HCT116 (cell line): ENCODE measurements at regions of chr1 and their contacts with region 1.

Region 1: GRCh38 chr1:23330846-23331245 is 13.2 kb downstream of the HNRNPR start:
- DNase-seq: no peak
- ATAC-seq: no peak
- H3K4me3 ChIP-seq: no peak overlapping the region
- H3K27ac ChIP-seq: no peak overlapping the region
- H3K4me1 ChIP-seq: peaks cover 3 to 29% of the 10 kb centered on the region in 2 experiments; a peak in 3 of 4 replicates
- H3K27me3 ChIP-seq: no peaks in the 10 kb centered on the region
- CTCF ChIP-seq: no peak
- POLR2A ChIP-seq: no peak
- RAD21 ChIP-seq: no peak

Region 2: DNA sequence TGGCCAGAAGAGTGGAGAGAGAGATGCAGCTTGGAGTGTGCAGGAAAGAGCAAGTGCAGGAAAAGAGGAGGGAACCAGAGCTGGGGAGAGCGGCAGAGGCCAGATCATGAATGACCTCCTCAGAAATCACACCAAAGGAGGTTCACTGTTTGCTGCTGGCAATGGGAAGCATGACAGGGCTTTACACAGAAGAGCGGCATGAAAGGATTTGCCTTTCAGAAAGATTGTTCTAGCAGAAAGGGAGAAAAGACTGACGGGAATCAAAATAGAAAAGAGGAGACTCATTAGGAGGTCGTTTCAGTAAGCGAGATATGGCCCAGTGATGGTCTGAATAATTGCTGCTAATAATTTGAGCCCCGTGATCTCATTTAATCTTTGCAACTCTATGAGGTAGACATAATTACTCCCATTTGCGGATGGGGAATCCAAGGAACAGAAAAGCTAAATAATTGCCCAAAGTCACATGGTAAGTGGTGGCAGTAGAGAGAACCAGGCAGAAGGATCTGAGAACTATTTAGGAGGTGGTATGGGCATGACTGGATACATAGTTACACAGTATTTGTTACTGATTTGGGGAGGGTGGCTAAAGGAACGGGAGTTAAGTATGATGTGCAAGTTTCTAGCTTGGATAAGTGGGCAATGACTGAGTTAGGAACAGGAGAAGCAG is 25.8 kb after region 1 on chr1:
- CTCF ChIA-PET with region 1: no interaction called
- POLR2A ChIA-PET with region 1: no interaction called
- RAD21 ChIA-PET with region 1: no interaction called
- intact Hi-C with region 1: loop called (anchors 1 kb)
- DNase-seq: no peak
- ATAC-seq: no peak
- H3K4me3 ChIP-seq: no peak overlapping the region
- H3K27ac ChIP-seq: no peak overlapping the region
- H3K4me1 ChIP-seq: peaks cover 0 to 7% of the 10 kb centered on the region in 2 experiments; a peak in 1 of 4 replicates
- H3K27me3 ChIP-seq: no peaks in the 10 kb centered on the region
- CTCF ChIP-seq: no peak
- POLR2A ChIP-seq: no peak
- RAD21 ChIP-seq: no peak